T-cell (primary cell): ENCODE measurements at regions of chr10 and their contacts with region 1.

Region 1: GRCh38 chr10:73591935-73592699 is 975 bp upstream of the USP54 start:
- DNase-seq: peak in 17 of 35 experiments; percentile 1 to 23 (median 8)
- ATAC-seq: peak in 2 of 4 experiments; percentile 52 to 59
- H3K4me3 ChIP-seq: no peak overlapping the region
- H3K4me3 Mint-ChIP-seq: peak overlapping the region; percentile 4 to 53 (median 34)
- H3K27ac ChIP-seq: peak overlapping the region; percentile 53
- H3K27ac Mint-ChIP-seq: peak overlapping the region; percentile 56 to 75
- H3K4me1 ChIP-seq: peaks cover 10 to 12% of the 10 kb centered on the region in 2 experiments
- H3K4me1 Mint-ChIP-seq: peaks cover 17 to 22% (median 21%) of the 10 kb centered on the region in 3 donors
- H3K27me3 ChIP-seq: no peaks in the 10 kb centered on the region
- H3K27me3 Mint-ChIP-seq: no peaks in the 10 kb centered on the region

Region 2: GRCh38 chr10:73537288-73537687 is 54.8 kb before region 1 on chr10:
- CTCF ChIA-PET with region 1: no interaction called
- POLR2A ChIA-PET with region 1: no interaction called
- DNase-seq: peak in 1 of 35 experiments; percentile 20
- ATAC-seq: peak in 3 of 4 experiments; percentile 19 to 71 (median 53)
- H3K4me3 ChIP-seq: no peak overlapping the region
- H3K4me3 Mint-ChIP-seq: no peak overlapping the region
- H3K27ac ChIP-seq: no peak overlapping the region
- H3K27ac Mint-ChIP-seq: no peak overlapping the region
- H3K4me1 ChIP-seq: peaks cover 2 to 8% of the 10 kb centered on the region in 2 experiments
- H3K4me1 Mint-ChIP-seq: peaks cover 10 to 20% (median 16%) of the 10 kb centered on the region in 3 donors
- H3K27me3 ChIP-seq: no peaks in the 10 kb centered on the region
- H3K27me3 Mint-ChIP-seq: peaks cover 0 to 9% of the 10 kb centered on the region in 2 donors

Region 3: GRCh38 chr10:74728225-74728624 is 1136.1 kb after region 1 on chr10:
- CTCF ChIA-PET with region 1: no interaction called
- POLR2A ChIA-PET with region 1: interaction called in 1 of 2 experiments, 14 read pairs
- DNase-seq: no peak
- ATAC-seq: no peak
- H3K4me3 ChIP-seq: no peak overlapping the region
- H3K4me3 Mint-ChIP-seq: no peak overlapping the region
- H3K27ac ChIP-seq: no peak overlapping the region
- H3K27ac Mint-ChIP-seq: no peak overlapping the region
- H3K4me1 ChIP-seq: no peaks in the 10 kb centered on the region
- H3K4me1 Mint-ChIP-seq: no peaks in the 10 kb centered on the region
- H3K27me3 ChIP-seq: no peaks in the 10 kb centered on the region
- H3K27me3 Mint-ChIP-seq: no peaks in the 10 kb centered on the region